ENCODE measurements at regions of chr10 and their contacts with region 1.

Region 1: GRCh38 chr10:43361986-43362839 is 9.2 kb upstream of the FXYD4 start:
- DNase-seq: peak; percentile 97 to 98
- H3K4me3 ChIP-seq: peak overlapping the region; percentile 40 to 70 (median 57)
- H3K27ac ChIP-seq: peak overlapping the region; percentile 87 to 90
- H3K4me1 ChIP-seq: no peaks in the 10 kb centered on the region
- H3K27me3 ChIP-seq: no peaks in the 10 kb centered on the region
- CTCF ChIP-seq: peak in 2 of 3 donors; percentile 4 to 56
- POLR2A ChIP-seq: no peak

Region 2: DNA sequence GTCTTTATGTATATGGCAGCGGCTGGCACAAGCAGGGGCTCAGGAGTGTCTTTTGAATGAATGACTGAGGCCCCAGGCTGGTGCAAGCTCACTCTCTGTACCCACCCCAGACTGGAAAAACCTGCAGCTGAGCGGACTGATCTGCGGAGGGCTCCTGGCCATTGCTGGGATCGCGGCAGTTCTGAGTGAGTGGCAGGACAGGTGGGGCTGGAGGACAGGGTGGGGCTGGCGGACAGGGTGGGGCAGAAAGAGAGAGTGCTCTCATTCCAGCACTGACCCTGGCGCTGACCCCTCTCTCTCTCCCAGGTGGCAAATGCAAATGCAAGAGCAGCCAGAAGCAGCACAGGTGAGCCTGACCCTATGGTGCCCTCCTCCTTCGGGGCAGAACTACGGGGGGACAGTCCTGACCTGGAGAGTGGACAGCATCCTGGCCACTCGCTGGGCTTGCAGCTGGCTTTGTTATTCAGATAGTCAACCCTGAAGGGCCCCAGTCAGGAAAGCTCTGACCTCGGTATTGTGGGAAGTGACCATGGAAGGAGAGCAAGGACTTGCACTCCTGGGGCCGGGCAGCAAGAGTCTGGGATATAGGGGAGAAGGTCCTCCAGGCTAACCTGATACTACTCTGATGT is 13.3 kb after region 1 on chr10:
- intact Hi-C with region 1: loop called (anchors 1 kb)
- DNase-seq: peak in 1 of 2 donors; percentile 15
- H3K4me3 ChIP-seq: no peak overlapping the region
- H3K27ac ChIP-seq: no peak overlapping the region
- H3K4me1 ChIP-seq: no peaks in the 10 kb centered on the region
- H3K27me3 ChIP-seq: no peaks in the 10 kb centered on the region
- CTCF ChIP-seq: no peak
- POLR2A ChIP-seq: no peak

Measured in breast epithelium (tissue), 4 donors.